ENCODE measurements at regions of chr11 and their contacts with region 1.

Region 1: DNA sequence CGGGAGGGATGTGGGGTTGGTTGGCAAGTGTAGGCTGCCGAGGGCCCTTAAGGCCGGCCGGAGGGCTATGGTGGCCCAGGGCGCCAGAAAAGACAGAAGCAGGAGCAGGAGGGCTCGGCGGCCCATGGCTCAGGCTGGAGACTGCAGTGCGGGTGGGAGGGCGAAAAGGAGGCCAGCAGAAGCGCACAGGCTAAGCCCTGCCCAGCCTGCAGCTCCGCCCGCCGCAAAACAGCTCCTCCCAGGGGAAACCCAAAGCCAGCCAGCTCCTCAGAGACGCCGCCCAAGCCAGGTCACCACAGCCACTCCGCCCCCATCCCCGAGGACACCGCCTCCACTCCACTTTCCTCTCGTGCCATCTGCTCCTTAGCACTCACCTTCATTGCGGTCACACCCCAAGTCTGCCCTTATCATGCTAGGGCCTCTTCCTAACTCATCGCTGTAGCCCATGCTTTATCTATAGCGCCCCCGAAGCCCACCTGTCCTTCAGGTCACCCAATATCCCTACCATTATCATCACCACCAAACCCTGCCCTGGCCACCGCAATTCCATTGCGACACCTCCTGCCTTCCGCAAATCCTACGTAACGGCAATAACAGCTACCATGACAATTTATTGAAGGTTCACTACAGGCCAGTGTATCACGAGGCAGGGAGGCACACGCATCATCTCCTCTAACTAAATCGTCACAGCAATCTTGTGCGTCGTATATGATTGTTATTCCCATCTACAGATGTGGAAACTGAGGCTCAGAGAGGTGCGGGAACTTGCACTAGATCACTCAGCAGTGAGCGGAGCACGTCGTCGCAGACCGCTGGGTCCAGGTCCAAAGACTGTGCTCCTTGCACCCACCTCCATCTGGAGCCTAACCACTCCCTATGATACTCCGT is at the start of gene PRCP:
- H3K4me3 ChIP-seq: peak within 1 kb of the TSS; percentile 53
- H3K27ac ChIP-seq: peak within 1 kb of the TSS; percentile 57; the same call in 1 of the 2 replicates
- H3K4me1 ChIP-seq: peaks cover 4% of the 10 kb centered on the region; the same call in 1 of the 2 replicates
- CTCF ChIP-seq: peak; percentile 74

Region 2: GRCh38 chr11:82994604-82995230 is 94.2 kb after region 1 on chr11:
- CTCF ChIA-PET with region 1: no interaction called
- POLR2A ChIA-PET with region 1: no interaction called
- H3K4me3 ChIP-seq: no peak overlapping the region
- H3K27ac ChIP-seq: no peak overlapping the region
- H3K4me1 ChIP-seq: peaks cover 13% of the 10 kb centered on the region
- CTCF ChIP-seq: no peak

Region 3: DNA sequence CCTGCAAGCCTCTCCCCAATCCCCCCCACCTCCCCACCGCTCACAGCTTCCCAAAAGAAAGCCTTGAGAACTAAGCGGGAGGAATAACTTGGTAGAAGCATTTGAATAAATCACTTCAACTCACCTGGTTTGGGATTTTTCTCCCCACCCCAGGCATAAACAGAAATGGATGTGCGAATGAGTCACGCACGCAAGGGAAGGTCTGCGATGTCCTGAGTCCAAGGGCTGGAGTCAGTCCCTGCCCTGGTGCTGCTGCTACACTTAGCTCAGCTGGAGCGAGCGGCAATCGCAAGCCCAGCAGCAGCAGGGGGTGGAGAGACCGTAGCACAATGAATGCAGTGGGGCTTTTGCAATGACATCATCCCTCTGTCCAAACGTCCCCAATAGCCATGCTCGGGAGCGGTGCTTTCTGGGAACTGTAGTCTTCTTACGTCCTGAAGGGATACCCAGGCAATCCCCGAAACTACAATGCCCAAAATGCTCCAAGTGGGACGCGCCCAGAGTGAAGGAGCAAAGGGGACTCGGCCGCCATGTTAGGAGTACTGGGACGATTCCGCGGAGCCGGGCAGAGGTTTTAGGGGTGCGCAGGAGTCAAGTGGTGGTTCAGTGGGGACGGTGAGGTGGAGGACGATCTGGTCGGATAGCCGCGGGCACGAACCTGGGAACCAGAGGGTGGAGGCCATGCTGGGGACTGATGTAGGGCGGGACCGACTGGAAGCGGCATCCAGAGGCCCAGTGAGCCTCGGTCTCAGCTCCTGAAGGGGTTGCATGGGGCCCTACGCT is 171.2 kb after region 1 on chr11 and contains the start of gene RAB30:
- CTCF ChIA-PET with region 1: no interaction called
- POLR2A ChIA-PET with region 1: interaction called, 11 read pairs
- H3K4me3 ChIP-seq: peak within 1 kb of the TSS; percentile 97
- H3K27ac ChIP-seq: peak within 1 kb of the TSS; percentile 71
- H3K4me1 ChIP-seq: peaks cover 3% of the 10 kb centered on the region; the same call in 1 of the 2 replicates
- CTCF ChIP-seq: no peak

Region 4: DNA sequence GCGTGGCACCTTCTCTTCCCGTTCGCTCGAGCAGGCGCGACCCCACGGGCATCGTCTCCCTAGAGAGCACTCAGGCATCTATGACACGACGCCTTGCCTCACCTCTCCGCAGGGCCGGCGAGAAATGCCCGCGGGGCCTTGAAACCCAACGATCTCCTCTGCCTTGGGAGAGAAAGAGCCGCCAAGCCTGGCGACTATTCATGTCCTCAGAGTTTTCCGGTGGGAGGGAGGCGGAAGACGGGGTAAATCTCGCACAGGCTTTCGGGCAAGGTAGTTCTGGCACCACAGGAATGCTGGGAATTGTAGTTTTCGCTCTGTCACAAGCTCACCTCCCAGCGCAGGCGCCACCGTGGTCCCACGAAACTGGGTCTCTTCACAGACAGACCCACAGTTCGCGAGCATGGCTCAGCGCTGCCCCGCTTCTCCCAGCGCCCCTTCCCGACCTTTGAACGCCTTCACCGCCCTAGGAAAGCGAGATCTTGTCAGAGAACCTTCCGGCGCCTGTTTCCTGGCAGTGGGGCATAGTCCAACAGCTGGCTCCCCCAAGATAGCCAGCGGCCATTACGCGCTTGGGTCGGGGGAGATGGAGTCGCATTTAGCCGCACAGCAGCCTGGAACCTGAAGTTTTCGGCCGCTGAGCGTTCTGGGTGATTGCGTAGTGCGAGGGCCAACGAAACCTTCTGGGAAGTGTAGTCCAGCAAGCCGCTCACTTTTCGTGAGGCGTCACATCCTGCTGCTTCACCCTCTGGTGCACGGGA is 385.4 kb after region 1 on chr11 and contains the start of gene CCDC90B:
- CTCF ChIA-PET with region 1: interaction called, 3 read pairs
- POLR2A ChIA-PET with region 1: interaction called, 19 read pairs
- H3K4me3 ChIP-seq: peak within 1 kb of the TSS; percentile 73
- H3K27ac ChIP-seq: peak within 1 kb of the TSS; percentile 61
- H3K4me1 ChIP-seq: no peaks in the 10 kb centered on the region
- CTCF ChIP-seq: peak; percentile 81

Measured in HEK293 (cell line).